PC-3 (cell line): ENCODE measurements at regions of chr20 and their contacts with region 1.

Region 1: DNA sequence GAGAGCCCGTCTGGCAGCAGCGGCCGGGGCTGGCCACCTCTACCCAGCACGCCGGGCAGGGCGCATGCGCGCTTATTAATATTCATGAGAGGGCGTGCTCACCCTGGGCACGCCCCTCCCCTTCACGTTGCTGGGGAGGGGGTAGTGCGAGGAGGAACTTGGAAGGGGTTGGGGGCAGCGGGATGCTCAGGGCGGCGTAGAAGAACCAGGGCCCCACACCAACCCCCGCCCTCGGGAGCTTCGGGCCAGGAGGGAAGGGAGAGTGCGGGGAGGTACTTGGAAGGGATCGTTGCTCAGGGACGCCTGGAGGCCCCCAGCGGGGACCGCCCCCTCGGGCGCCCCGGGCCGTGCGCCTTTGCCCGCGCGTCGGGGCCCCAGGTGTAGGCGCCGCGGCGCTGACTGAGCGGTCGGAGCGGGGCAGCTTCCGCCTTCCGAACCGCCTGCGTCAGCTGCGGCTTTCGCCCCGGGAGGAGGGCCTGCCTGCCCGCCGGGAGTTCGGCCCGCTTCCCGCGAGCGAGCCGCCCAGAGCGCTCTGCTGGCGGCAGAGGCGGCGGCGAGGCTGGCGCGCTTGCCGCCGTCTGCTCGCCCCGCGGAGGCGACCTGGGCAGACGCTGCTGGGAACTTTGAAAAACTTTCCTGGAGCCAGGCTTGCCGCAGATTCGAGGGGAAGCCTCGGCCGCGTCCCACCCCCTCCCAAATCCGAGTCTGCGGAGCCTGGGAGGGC is at the start of gene JAG1:
- DNase-seq: peak; percentile 99
- ATAC-seq: peak; percentile 56
- H3K4me3 ChIP-seq: peak within 1 kb of the TSS; percentile 95
- H3K27ac ChIP-seq: peak within 1 kb of the TSS; percentile 95
- H3K4me1 ChIP-seq: peaks cover 38% of the 10 kb centered on the region
- H3K27me3 ChIP-seq: no peaks in the 10 kb centered on the region
- CTCF ChIP-seq: no peak
- total RNA-seq, gene JAG1: 176 and 184 TPM in 2 replicates

Region 2: DNA sequence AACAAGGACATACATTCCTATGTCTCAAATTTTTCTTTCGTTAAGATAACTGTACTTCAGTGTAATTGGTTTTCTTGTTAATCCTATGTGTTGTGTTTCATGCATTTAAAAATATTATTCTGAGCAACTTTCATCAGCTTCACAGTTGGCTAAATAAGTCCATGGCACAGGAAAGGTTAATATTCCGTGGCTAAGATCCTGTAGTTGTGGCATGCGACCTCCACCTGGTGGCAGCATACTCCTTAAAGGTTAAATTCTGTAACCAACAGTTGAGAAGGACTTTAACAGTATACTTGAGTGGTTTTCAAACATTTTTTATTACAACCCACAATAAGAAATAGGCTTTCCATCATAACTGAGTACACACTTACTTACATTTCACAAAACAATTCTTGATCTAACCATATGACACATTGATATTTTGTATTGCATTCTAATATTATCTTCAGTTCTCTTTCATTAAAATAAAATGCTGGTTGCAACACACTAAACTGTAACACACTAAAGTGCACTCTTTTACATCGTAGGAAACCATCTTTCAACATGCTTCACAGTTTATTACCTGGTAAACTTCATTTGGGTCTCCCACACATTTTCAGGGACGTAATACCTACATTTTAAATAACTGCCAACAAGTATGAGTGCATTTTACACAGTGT is 120.7 kb before region 1 on chr20:
- CTCF ChIA-PET with region 1: no interaction called
- POLR2A ChIA-PET with region 1: interaction called, 3 read pairs
- intact Hi-C with region 1: loop called (anchors 1 kb)
- DNase-seq: peak; percentile 91
- ATAC-seq: peak; percentile 64
- H3K4me3 ChIP-seq: no peak overlapping the region
- H3K27ac ChIP-seq: peak overlapping the region; percentile 96
- H3K4me1 ChIP-seq: peaks cover 50% of the 10 kb centered on the region
- H3K27me3 ChIP-seq: no peaks in the 10 kb centered on the region
- CTCF ChIP-seq: peak; percentile 96

Region 3: DNA sequence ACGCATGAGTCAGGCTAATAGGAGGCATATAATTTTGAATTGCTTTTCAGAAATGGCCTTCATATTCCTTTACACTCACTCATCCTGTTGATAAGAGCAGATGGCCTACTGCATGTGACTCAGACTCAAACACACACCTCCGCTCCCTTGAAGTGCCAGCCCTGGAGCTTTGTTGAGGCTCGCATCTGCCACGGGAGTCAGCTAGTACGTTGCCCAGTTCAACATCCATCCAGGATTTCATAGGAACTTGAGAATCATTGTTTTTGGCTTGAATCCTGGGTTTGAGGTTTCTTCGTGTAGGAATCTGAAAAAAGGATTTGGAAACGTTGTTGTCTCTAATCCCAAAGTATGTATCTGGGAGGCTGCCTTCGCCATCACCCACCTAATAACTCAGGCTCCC is 87.1 kb after region 1 on chr20:
- CTCF ChIA-PET with region 1: interaction called, 12 read pairs
- POLR2A ChIA-PET with region 1: interaction called, 7 read pairs
- intact Hi-C with region 1: loop called (anchors 1 kb)
- DNase-seq: peak; percentile 93
- ATAC-seq: peak; percentile 65
- H3K4me3 ChIP-seq: 0 out of 2 replicates have a peak overlapping the region, but pooled peaks have one; percentile 9
- H3K27ac ChIP-seq: peak overlapping the region; percentile 94
- H3K4me1 ChIP-seq: peaks cover 42% of the 10 kb centered on the region
- H3K27me3 ChIP-seq: no peaks in the 10 kb centered on the region
- CTCF ChIP-seq: no peak

Region 4: GRCh38 chr20:10877342-10877741 is 203.2 kb after region 1 on chr20:
- CTCF ChIA-PET with region 1: no interaction called
- POLR2A ChIA-PET with region 1: interaction called, 11 read pairs
- intact Hi-C with region 1: no loop called
- DNase-seq: no peak
- ATAC-seq: no peak
- H3K4me3 ChIP-seq: no peak overlapping the region
- H3K27ac ChIP-seq: no peak overlapping the region
- H3K4me1 ChIP-seq: no peaks in the 10 kb centered on the region
- H3K27me3 ChIP-seq: no peaks in the 10 kb centered on the region
- CTCF ChIP-seq: no peak

Region 5: GRCh38 chr20:11098888-11099287 is 424.7 kb after region 1 on chr20:
- CTCF ChIA-PET with region 1: no interaction called
- POLR2A ChIA-PET with region 1: no interaction called
- intact Hi-C with region 1: loop called (anchors 1 kb)
- DNase-seq: peak; percentile 62
- ATAC-seq: peak; percentile 80
- H3K4me3 ChIP-seq: no peak overlapping the region
- H3K27ac ChIP-seq: no peak overlapping the region
- H3K4me1 ChIP-seq: peaks cover 8% of the 10 kb centered on the region
- H3K27me3 ChIP-seq: no peaks in the 10 kb centered on the region
- CTCF ChIP-seq: peak; percentile 68

Region 6: DNA sequence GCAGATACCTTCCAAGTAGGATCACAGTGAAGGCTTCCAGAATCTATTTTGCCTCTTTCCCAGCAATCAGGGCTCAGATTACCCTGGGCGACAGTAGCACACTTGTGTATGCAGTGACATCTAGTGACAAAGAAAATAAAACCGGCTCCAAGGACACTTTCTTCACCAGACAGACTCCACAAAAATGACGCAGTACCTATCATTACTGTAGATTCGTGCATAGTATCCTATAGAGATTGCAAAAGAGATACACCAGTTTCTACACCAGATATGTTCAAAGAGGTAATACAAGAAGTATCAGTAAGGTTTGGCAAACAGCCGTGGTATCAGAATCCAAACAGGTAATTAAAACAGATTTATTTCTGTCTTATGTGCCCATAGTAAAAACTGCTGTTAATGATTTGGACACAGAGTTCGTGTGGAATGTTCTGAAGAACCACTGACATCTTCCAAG is 600.0 kb after region 1 on chr20:
- CTCF ChIA-PET with region 1: interaction called, 3 read pairs
- POLR2A ChIA-PET with region 1: interaction called, 3 read pairs
- intact Hi-C with region 1: loop called (anchors 1 kb)
- DNase-seq: peak; percentile 89
- ATAC-seq: peak; percentile 97
- H3K4me3 ChIP-seq: no peak overlapping the region
- H3K27ac ChIP-seq: no peak overlapping the region
- H3K4me1 ChIP-seq: peaks cover 7% of the 10 kb centered on the region
- H3K27me3 ChIP-seq: no peaks in the 10 kb centered on the region
- CTCF ChIP-seq: peak; percentile 93